Panc1 (cell line): ENCODE measurements at regions of chr20 and their contacts with region 1.

Region 1: DNA sequence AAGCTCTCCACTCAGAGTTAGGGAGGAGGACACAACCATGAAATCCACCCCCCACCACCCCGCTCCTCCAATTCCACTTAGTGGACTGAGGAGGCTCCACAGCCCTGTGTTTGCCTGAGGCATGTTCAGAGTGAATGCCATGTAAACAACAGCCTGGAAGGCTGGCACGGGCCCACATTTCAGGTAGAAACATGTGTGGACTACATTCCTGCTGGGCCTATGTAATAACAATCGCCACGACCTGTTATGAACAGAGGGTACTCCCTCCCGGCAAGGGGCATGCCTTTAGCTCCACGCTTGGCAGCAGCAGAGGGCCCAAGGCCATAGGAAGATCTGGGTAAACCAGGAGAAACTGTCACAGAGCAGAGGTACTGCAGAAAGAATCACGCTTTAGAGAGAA is 65.5 kb downstream of the ISM1 start:
- DNase-seq: no peak
- ATAC-seq: no peak
- H3K4me3 ChIP-seq: no peak overlapping the region
- H3K27ac ChIP-seq: no peak overlapping the region
- H3K4me1 ChIP-seq: no peaks in the 10 kb centered on the region
- H3K27me3 ChIP-seq: no peaks in the 10 kb centered on the region; the same call in 1 of the 2 replicates
- CTCF ChIP-seq: no peak

Region 2: GRCh38 chr20:13261460-13262301 is 24.9 kb before region 1 on chr20:
- CTCF ChIA-PET with region 1: no interaction called
- POLR2A ChIA-PET with region 1: no interaction called
- in situ Hi-C with region 1: no loop called
- intact Hi-C with region 1: no loop called
- DNase-seq: peak; percentile 22
- ATAC-seq: peak; percentile 75; the same call in 1 of the 2 replicates
- H3K4me3 ChIP-seq: no peak overlapping the region
- H3K27ac ChIP-seq: no peak overlapping the region
- H3K4me1 ChIP-seq: no peaks in the 10 kb centered on the region
- H3K27me3 ChIP-seq: 0 out of 2 replicates have a peak, but pooled peaks cover 2% of the 10 kb centered on the region
- CTCF ChIP-seq: peak; percentile 71

Region 3: DNA sequence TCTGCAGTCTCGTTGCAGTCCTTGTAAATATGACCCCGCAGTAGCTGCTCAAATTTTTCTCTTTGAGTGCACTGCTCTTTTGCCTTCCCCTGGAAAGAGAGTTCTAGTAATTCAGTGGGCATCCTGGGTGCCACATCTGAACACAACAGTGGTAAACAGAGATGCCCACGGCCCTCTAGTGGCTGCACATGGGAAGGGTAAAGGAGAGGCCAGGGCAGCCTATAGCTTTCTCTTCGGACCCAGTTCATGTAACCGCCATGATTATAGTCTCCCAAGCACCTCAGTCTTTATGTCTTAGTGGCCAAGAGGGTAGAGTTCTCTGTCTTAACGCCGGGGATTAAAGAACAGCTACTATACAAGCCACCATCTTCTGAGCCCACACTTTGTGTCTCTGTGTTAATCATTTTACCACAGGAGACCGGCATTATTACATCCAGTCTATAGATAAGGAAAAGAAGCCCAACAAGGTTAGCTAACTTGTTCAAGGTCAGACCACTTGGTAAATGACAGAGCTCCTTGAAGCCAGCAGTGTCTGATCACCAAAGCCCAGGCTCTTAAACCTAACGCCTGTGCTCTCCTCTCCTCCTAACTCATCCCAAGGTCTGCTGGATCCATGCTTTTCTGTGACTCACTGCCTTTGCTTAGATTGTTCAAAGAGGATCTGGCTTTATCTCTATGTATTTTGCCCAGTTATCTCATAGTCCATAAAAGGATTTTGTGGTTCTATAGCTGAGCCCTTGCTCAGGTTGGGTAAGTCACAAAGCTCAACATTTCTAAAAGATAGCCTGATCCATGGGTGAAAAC is 16.2 kb after region 1 on chr20:
- CTCF ChIA-PET with region 1: no interaction called
- POLR2A ChIA-PET with region 1: interaction called, 11 read pairs
- in situ Hi-C with region 1: no loop called
- intact Hi-C with region 1: no loop called
- DNase-seq: no peak
- ATAC-seq: peak; percentile 93
- H3K4me3 ChIP-seq: no peak overlapping the region
- H3K27ac ChIP-seq: no peak overlapping the region
- H3K4me1 ChIP-seq: no peaks in the 10 kb centered on the region
- H3K27me3 ChIP-seq: no peaks in the 10 kb centered on the region
- CTCF ChIP-seq: peak; percentile 84

Region 4: GRCh38 chr20:13336308-13337089 is 49.9 kb after region 1 on chr20:
- CTCF ChIA-PET with region 1: no interaction called
- POLR2A ChIA-PET with region 1: no interaction called
- in situ Hi-C with region 1: no loop called
- intact Hi-C with region 1: no loop called
- DNase-seq: no peak
- ATAC-seq: no peak
- H3K4me3 ChIP-seq: no peak overlapping the region
- H3K27ac ChIP-seq: no peak overlapping the region
- H3K4me1 ChIP-seq: no peaks in the 10 kb centered on the region
- H3K27me3 ChIP-seq: no peaks in the 10 kb centered on the region
- CTCF ChIP-seq: no peak